ENCODE measurements at regions of chr15 and their contacts with region 1.

Region 1: DNA sequence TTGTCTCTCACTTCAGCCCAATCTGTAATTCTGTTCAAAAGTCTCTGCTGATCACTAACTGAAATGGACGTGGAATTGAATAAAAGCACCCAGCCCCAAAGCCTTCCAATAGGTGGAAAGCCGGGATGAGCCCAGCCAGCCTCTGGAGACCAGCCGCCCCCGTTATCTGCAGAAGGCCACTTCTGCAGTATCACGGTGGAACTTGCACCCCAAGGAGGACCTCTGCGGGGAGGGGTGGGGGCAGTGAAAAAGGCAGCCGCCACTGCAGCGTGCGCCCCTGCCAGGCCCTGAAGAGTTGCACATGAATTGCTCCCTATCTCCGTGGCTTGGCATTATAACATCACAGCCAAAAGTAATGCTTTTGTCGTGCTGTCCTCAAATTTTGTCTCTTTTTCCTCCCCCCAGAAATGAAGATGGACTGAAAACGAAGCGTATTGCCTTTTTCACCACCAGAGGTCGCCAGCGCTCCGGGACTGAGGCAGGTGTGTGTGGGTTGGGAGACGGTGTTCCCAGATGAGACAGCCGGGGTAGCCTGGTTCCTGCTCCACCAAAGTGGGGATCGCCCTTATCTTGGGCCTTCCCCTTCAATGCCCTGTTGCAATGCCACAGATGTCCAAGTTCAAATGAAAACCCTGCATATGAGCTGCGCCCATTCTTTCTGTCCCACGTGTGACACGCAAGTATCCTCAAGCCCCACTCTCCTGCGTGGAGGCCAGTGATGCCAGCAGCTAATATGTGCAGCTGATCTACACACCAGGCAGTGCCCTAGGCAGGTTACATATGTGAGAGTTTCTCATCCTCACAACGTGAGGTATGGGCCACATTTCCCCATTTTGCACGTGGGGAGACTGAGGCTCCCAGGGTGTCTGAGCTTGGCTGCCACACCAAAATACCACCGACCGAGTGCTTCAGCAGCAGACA is 96.0 kb downstream of the LRRK1 start:
- DNase-seq: peak; percentile 67 to 78
- H3K4me3 ChIP-seq: no peak overlapping the region
- H3K27ac ChIP-seq: no peak overlapping the region
- H3K4me1 ChIP-seq: no peaks in the 10 kb centered on the region
- H3K27me3 ChIP-seq: no peaks in the 10 kb centered on the region
- CTCF ChIP-seq: peak; percentile 63 to 86 (median 78)
- POLR2A ChIP-seq: no peak

Region 2: DNA sequence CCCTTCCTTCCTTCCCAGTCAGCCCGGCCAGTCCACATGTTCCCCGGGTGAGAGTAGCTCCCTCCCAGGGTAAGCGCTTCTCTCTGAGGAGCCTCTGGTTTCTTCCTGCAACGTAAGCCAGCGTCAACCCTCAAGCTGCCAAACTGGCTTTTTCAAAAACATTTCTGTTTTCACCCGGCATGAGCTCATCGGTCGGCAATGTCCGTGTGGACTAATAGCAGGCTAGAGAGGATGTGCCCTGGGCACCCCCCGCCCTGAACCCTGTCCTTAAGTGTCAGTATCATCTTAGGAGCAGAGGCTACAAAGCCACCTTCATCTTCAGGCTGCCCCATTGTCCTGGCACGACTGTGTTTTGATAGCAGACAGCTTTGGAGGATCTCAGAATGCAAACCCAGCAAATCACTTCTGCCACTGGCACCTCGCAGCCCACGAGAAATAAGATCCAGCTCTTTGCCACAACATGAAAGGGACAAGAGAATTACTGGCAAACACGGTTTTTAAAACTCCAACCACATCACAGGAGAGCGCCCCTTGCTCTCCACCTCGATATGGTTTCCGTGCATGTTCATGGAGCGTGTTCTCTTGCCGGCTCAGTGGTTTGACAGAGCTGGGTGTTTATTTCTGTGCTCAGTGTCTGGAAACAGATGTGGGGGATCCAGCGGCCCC is 125.7 kb before region 1 on chr15:
- intact Hi-C with region 1: no loop called
- DNase-seq: peak; percentile 65 to 73
- H3K4me3 ChIP-seq: no peak overlapping the region
- H3K27ac ChIP-seq: no peak overlapping the region
- H3K4me1 ChIP-seq: peaks cover 13 to 23% of the 10 kb centered on the region in 2 donors
- H3K27me3 ChIP-seq: no peaks in the 10 kb centered on the region
- CTCF ChIP-seq: no peak
- POLR2A ChIP-seq: peak in 1 of 2 donors; percentile 18

Region 3: GRCh38 chr15:101088788-101089583 is 73.8 kb after region 1 on chr15:
- intact Hi-C with region 1: loop called (anchors 5 kb)
- DNase-seq: peak; percentile 85
- H3K4me3 ChIP-seq: no peak overlapping the region
- H3K27ac ChIP-seq: no peak overlapping the region
- H3K4me1 ChIP-seq: peaks cover 6 to 37% of the 10 kb centered on the region in 2 donors
- H3K27me3 ChIP-seq: no peaks in the 10 kb centered on the region
- CTCF ChIP-seq: peak; percentile 90 to 100 (median 100)
- POLR2A ChIP-seq: no peak

Region 4: GRCh38 chr15:101258238-101259144 is 243.3 kb after region 1 on chr15:
- intact Hi-C with region 1: loop called (anchors 2 kb)
- DNase-seq: peak; percentile 61 to 65
- H3K4me3 ChIP-seq: no peak overlapping the region
- H3K27ac ChIP-seq: no peak overlapping the region
- H3K4me1 ChIP-seq: no peaks in the 10 kb centered on the region
- H3K27me3 ChIP-seq: no peaks in the 10 kb centered on the region
- CTCF ChIP-seq: peak; percentile 68 to 94 (median 84)
- POLR2A ChIP-seq: no peak